ENCODE measurements at regions of chr3 and their contacts with region 1.

Region 1: DNA sequence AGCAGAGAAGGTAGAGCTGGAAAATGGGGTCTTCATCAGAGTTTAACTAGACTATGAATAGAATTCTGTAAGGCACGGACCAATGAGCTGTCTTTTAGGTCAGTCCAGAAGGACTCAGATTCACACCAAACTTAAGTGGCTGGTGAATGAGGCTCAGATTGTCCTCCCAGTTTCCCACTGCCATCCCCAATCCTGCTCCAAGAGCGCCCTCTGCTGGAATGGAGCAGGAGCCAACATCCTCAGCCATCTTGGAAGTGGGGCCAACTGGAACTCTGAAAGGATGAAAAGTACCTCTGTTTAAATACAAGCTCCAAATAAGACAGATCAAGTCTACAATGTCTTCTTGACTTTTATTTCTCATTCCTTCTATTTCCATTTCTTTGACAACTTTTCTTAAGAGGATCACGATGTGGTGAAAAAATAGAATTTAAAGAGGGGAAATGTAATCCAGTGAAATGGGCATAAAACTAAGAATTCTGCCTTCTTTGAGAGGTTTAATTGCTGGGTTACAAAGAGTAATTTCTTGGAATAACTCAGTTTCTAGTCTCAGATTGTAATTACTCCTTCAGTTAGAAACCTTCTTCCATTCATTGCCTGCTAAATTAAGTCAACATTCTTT is 217.1 kb upstream of the TPRG1 start:
- DNase-seq: peak; percentile 87 to 90 (median 87)
- ATAC-seq: peak; percentile 68 to 86 (median 85)
- H3K4me3 ChIP-seq: no peak overlapping the region
- H3K27ac ChIP-seq: peak overlapping the region in 4 of 12 donors; percentile 13 to 34 (median 26)
- H3K4me1 ChIP-seq: peaks cover 0 to 46% (median 13%) of the 10 kb centered on the region in 12 donors
- H3K27me3 ChIP-seq: no peaks in the 10 kb centered on the region
- CTCF ChIP-seq: peak; percentile 89 to 99 (median 94)
- POLR2A ChIP-seq: no peak

Region 2: DNA sequence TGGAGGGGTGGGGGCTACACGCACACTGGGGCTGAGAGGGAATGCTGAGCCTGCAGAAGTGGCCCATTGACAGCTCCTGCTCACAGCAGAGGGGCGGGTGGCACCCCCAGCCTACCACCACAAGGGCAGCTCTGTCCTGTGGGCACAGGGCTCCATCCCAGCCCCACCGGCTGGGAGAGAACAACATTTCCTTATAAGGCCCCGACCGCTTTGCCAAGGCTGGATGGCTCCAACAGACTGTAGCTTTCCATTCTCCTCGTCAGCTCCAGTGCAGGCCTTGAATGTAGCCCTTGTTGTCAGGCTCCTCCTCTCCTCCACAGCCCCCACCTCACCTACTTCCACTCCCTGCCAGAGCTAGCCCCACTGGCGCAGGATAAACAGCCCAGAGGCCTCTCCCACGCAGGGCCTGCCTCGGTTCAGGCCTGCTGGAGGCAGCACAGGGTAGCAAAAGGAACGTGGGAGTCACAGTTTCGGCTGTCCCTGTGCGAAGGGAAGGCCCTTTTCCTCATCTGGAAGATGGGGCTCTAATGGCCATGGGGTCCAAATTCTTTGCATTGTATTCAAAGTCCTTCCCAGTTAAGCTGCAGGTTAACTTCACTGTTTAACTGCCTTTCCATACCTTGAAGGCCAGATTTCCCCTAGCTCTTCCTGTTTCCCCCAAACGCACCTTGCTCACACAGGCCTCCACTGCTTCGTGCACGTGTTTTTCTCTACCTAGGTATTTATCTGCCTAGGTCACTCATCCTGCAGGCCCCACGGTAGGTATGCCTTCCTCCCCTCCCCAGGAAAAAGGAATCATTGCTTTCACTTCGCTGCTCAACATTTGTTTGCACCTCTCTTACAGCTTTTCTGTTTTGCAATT is 902.3 kb before region 1 on chr3:
- intact Hi-C with region 1: loop called in 9 of 10 experiments (anchors 5 to 10 kb)
- DNase-seq: peak; percentile 84 to 92 (median 89)
- ATAC-seq: peak; percentile 97 to 98 (median 98)
- H3K4me3 ChIP-seq: peak overlapping the region in 6 of 12 donors; percentile 12 to 37 (median 24)
- H3K27ac ChIP-seq: peak overlapping the region; percentile 49 to 92 (median 79)
- H3K4me1 ChIP-seq: peaks cover 0 to 29% (median 15%) of the 10 kb centered on the region in 12 donors
- H3K27me3 ChIP-seq: peaks cover 0 to 3% (median 0%) of the 10 kb centered on the region in 9 donors
- CTCF ChIP-seq: peak in 11 of 12 donors; percentile 19 to 82 (median 59)
- POLR2A ChIP-seq: peak in 1 of 2 donors; percentile 24

Region 3: DNA sequence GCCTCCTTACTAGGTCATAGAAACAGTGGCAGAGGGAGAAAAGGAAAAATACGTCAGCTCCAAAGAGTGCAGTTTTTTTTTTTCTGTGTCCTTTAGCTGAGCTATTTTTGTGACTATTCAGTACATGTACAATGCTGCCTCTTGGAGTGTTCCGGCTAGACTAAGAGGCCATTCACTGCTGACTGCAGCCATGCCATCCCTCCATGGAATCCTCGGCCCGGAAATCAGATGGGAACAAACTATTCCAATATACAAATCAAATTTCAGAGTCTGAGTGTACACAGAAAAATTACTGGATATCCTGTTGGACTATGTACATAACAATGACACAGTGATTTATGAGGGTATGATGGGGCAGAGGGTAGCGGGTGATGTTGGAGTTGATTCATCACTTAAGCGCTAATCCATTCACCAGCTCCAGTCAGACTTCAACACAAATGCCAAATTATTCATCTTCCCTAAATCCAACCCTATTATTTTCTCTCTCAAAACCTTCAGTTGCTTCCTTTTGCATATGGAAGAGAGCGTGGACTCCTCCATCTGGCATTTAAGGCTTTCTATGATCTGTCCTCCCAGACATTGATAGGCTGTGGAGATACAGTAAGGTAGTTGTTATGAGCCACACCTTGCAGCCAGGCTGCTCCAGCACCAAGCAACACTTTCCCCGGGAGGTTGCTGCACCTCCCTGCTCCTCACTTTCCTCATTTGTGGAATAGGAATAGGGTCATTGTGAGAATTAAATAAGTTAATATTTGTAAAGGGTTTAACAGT is 691.6 kb before region 1 on chr3:
- intact Hi-C with region 1: loop called in 5 of 10 experiments (anchors 5 to 10 kb)
- DNase-seq: peak in 4 of 5 donors; percentile 47 to 60 (median 50)
- ATAC-seq: peak; percentile 79 to 88 (median 86)
- H3K4me3 ChIP-seq: no peak overlapping the region
- H3K27ac ChIP-seq: peak overlapping the region; percentile 74 to 96 (median 89)
- H3K4me1 ChIP-seq: peaks cover 2 to 94% (median 64%) of the 10 kb centered on the region in 12 donors
- H3K27me3 ChIP-seq: no peaks in the 10 kb centered on the region
- CTCF ChIP-seq: peak in 1 of 12 donors; percentile 7
- POLR2A ChIP-seq: no peak

Region 4: GRCh38 chr3:188554404-188554803 is 400.3 kb before region 1 on chr3:
- intact Hi-C with region 1: loop called in 1 of 10 experiments (anchors 10 kb)
- DNase-seq: peak in 1 of 5 donors; percentile 27
- ATAC-seq: peak; percentile 20 to 73 (median 65)
- H3K4me3 ChIP-seq: no peak overlapping the region
- H3K27ac ChIP-seq: peak overlapping the region in 3 of 12 donors; percentile 3 to 13 (median 5)
- H3K4me1 ChIP-seq: peaks cover 0 to 45% (median 13%) of the 10 kb centered on the region in 12 donors
- H3K27me3 ChIP-seq: no peaks in the 10 kb centered on the region
- CTCF ChIP-seq: no peak
- POLR2A ChIP-seq: no peak

Region 5: DNA sequence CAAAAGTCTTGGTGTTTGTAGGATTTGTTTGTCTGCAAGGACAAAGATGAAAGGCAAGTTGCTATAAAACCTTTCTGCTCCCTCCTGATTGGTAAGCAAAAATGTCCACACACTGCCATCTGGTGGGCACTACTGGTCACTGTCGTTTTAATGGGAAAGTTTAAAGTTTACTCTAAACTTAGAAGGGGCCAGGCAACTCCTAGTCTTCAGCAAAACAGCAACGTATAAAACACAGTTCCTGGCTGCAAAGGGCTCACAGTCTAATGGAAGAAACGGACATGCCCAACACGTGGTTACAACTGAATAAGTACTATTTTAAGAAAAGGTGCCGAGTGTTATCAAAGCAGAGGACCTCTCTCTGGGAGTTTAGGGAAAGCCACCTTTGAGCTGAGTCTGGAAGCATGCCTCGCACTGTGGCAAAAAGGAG is 193.4 kb after region 1 on chr3:
- intact Hi-C with region 1: loop called in 8 of 10 experiments (anchors 5 to 10 kb)
- DNase-seq: peak in 4 of 5 donors; percentile 54 to 67 (median 60)
- ATAC-seq: peak in 3 of 4 donors; percentile 75 to 78 (median 75)
- H3K4me3 ChIP-seq: no peak overlapping the region
- H3K27ac ChIP-seq: peak overlapping the region in 4 of 12 donors; percentile 7 to 51 (median 27)
- H3K4me1 ChIP-seq: peaks cover 0 to 24% (median 5%) of the 10 kb centered on the region in 12 donors
- H3K27me3 ChIP-seq: no peaks in the 10 kb centered on the region
- CTCF ChIP-seq: peak; percentile 69 to 86 (median 78)
- POLR2A ChIP-seq: no peak